Activated CD8-positive, alpha-beta T cell treated with anti-CD3 and anti-CD28 coated beads, Interleukin-2, amount 10 ng/mL, durations not matched to agents 7 days and 5 days (primary cell): ENCODE measurements at regions of chr1 and their contacts with region 1.

Region 1: GRCh38 chr1:40032240-40032891 is 8.2 kb upstream of the CAP1 start:
- DNase-seq: peak; percentile 71
- ATAC-seq: peak; percentile 77
- H3K4me3 Mint-ChIP-seq: no peak overlapping the region
- H3K27ac Mint-ChIP-seq: no peak overlapping the region
- H3K4me1 Mint-ChIP-seq: peaks cover 43% of the 10 kb centered on the region
- H3K27me3 Mint-ChIP-seq: peaks cover 9% of the 10 kb centered on the region

Region 2: GRCh38 chr1:39816415-39817090 is 215.8 kb before region 1 on chr1:
- CTCF ChIA-PET with region 1: interaction called, 25 read pairs
- POLR2A ChIA-PET with region 1: no interaction called
- DNase-seq: peak; percentile 63
- ATAC-seq: peak; percentile 71
- H3K4me3 Mint-ChIP-seq: peak overlapping the region; percentile 44
- H3K27ac Mint-ChIP-seq: no peak overlapping the region
- H3K4me1 Mint-ChIP-seq: peaks cover 7% of the 10 kb centered on the region
- H3K27me3 Mint-ChIP-seq: peaks cover 30% of the 10 kb centered on the region

Region 3: DNA sequence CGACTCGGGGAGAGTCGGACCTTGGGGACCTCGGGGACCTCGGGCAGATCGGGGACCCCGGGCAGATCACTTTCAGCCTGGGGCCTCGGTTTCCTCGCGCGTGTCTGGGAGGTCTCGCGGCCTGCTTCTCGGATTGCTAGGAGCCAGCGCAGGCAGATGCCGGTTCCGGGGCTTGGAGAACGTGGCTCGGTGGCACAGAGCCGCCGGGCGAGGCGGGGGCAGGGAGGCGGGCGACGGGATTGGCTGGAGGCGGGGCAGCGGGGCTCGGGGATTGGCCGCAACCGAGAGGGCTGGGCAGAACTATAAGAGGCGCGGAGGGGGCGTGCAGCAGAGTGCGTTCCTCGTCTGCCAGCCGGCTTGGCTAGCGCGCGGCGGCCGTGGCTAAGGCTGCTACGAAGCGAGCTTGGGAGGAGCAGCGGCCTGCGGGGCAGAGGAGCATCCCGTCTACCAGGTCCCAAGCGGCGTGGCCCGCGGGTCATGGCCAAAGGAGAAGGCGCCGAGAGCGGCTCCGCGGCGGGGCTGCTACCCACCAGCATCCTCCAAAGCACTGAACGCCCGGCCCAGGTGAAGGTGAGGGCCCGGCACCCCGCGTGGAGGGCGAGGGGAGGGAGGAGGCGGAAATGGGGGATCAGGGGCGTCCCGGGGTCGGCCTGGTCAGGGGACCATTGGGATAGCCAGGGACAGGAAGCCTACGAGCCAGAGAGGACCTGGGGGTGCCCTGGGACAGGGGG is 77.4 kb before region 1 on chr1 and contains the start of gene MFSD2A:
- CTCF ChIA-PET with region 1: interaction called, 27 read pairs
- POLR2A ChIA-PET with region 1: no interaction called
- DNase-seq: peak; percentile 90
- ATAC-seq: peak; percentile 96
- H3K4me3 Mint-ChIP-seq: peak within 1 kb of the TSS; percentile 91
- H3K27ac Mint-ChIP-seq: peak within 1 kb of the TSS; percentile 81
- H3K4me1 Mint-ChIP-seq: peaks cover 23% of the 10 kb centered on the region
- H3K27me3 Mint-ChIP-seq: peaks cover 2% of the 10 kb centered on the region
- total RNA-seq, gene MFSD2A: 4.1 TPM

Region 4: DNA sequence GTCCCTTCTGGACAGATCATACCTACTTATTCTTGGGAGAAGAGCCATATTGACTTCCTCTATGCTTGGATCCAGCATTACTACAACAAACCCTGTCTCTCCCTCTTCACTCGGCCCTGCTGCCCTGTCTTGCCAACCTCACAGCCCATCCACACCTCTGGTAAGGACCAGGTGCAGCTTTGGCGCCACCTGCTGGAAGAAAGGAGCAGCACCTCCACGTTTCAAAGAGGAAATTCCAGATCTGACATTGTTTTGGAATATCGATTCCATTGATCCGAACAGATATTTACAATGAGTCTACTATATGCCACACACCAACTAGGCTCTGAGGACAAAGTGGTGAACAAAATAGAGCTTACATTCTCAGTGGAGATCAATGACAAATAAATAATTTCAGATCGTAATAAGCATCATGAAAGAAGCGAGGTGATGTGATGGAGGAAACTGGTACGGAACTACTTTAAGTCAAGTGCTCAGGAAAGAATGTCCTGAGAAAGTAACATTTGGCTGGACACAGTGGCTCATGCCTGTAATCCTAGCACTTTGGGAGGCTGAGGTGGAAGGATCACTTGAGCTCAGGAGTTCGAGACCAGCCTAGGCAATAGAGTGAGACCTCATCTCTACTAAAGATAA is 58.7 kb before region 1 on chr1:
- CTCF ChIA-PET with region 1: interaction called, 85 read pairs
- POLR2A ChIA-PET with region 1: no interaction called
- DNase-seq: peak; percentile 78
- ATAC-seq: peak; percentile 77
- H3K4me3 Mint-ChIP-seq: no peak overlapping the region
- H3K27ac Mint-ChIP-seq: no peak overlapping the region
- H3K4me1 Mint-ChIP-seq: peaks cover 5% of the 10 kb centered on the region
- H3K27me3 Mint-ChIP-seq: no peaks in the 10 kb centered on the region

Region 5: GRCh38 chr1:39995973-39996393 is 36.4 kb before region 1 on chr1:
- CTCF ChIA-PET with region 1: interaction called, 10 read pairs
- POLR2A ChIA-PET with region 1: no interaction called
- DNase-seq: peak; percentile 28
- ATAC-seq: peak; percentile 70
- H3K4me3 Mint-ChIP-seq: no peak overlapping the region
- H3K27ac Mint-ChIP-seq: peak overlapping the region; percentile 20
- H3K4me1 Mint-ChIP-seq: peaks cover 12% of the 10 kb centered on the region
- H3K27me3 Mint-ChIP-seq: no peaks in the 10 kb centered on the region

Region 6: GRCh38 chr1:40014812-40015594 is 17.4 kb before region 1 on chr1:
- CTCF ChIA-PET with region 1: interaction called, 13 read pairs
- POLR2A ChIA-PET with region 1: interaction called, 3 read pairs
- DNase-seq: no peak
- ATAC-seq: no peak
- H3K4me3 Mint-ChIP-seq: no peak overlapping the region
- H3K27ac Mint-ChIP-seq: no peak overlapping the region
- H3K4me1 Mint-ChIP-seq: peaks cover 1% of the 10 kb centered on the region
- H3K27me3 Mint-ChIP-seq: peaks cover 8% of the 10 kb centered on the region

Region 7: DNA sequence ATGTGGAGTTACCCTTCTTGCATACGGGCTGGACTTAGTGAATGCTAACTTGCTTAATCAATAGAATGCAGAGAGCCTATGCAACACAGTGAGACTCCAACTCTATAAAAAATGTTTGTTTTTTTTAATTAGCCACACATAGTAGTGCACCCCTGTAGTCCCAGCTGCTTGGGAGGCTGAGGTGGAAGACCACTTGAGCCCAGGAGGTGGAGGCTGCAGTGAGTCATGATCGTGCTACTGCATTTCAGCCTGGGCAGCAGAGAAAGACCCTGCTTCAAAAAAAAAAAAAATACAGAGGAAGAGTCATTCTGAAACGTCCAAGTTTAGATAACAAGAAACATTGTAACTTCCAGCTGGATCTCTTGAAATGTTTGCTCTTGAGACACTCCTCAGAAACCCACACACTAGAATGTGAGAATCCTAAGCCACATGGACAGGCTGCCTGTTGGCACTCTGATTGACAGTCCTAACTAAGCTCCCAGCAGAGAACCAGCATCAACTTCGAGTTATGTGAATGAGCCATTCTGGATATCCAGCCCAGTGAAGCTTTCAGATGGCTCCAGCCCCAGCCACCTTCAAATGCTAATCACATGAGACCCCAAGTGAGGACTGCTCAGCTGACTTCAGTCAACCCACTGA is 11.8 kb before region 1 on chr1:
- CTCF ChIA-PET with region 1: interaction called, 13 read pairs
- POLR2A ChIA-PET with region 1: interaction called, 3 read pairs
- DNase-seq: no peak
- ATAC-seq: no peak
- H3K4me3 Mint-ChIP-seq: no peak overlapping the region
- H3K27ac Mint-ChIP-seq: no peak overlapping the region
- H3K4me1 Mint-ChIP-seq: no peaks in the 10 kb centered on the region
- H3K27me3 Mint-ChIP-seq: peaks cover 12% of the 10 kb centered on the region